HCT116 (cell line): ENCODE measurements at regions of chr22 and their contacts with region 1.

Region 1: DNA sequence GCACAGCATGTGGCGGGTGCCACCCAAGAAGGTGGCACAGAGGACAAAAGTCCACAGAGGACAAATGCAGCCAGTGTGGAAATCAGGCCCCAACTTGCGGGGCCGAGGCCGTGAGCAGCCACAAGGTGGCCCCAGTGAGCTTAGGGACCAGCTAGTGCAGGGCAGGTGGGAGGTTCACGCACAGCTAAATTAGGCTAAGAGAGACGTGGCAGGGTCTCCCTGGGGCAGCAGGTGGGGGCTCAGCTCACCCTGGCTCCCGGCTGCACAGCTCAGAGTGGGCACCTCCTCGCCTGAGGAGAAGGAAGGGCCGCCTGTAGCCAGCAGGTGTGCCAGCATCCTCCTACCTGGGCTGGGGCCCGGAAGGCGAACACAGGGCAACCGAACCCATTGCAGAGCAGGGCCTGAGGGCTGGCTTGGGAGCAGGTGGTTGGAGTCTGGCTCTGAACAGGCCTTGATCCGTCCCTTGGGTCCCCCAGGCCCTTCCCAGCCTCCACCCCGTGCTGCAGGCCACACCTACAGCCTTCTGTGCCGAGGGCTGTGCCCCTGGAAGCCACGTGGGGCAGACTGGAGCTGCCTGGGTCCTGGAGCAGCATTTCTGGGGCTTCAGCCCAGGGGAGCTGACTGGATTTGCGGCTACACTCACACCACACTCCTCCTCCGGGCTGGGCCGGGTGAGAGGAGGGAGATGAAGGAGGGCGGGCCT is 26.1 kb upstream of the CELSR1 start:
- DNase-seq: peak; percentile 57
- ATAC-seq: peak; percentile 96
- H3K4me3 ChIP-seq: peak overlapping the region; percentile 32 to 47
- H3K27ac ChIP-seq: peak overlapping the region; percentile 81
- H3K4me1 ChIP-seq: peaks cover 19 to 32% of the 10 kb centered on the region in 2 experiments
- H3K27me3 ChIP-seq: no peaks in the 10 kb centered on the region
- CTCF ChIP-seq: peak; percentile 72 to 81 (median 75)
- POLR2A ChIP-seq: peak; percentile 40
- RAD21 ChIP-seq: peak; percentile 83

Region 2: GRCh38 chr22:46367707-46368191 is 195.8 kb before region 1 on chr22:
- CTCF ChIA-PET with region 1: interaction called, 15 read pairs
- POLR2A ChIA-PET with region 1: interaction called, 3 read pairs
- RAD21 ChIA-PET with region 1: interaction called in 1 of 2 experiments, 3 read pairs
- intact Hi-C with region 1: no loop called
- DNase-seq: peak; percentile 29
- ATAC-seq: peak; percentile 94
- H3K4me3 ChIP-seq: no peak overlapping the region
- H3K27ac ChIP-seq: no peak overlapping the region
- H3K4me1 ChIP-seq: peaks cover 0 to 12% of the 10 kb centered on the region in 2 experiments; a peak in 2 of 4 replicates
- H3K27me3 ChIP-seq: no peaks in the 10 kb centered on the region
- CTCF ChIP-seq: peak; percentile 85 to 96 (median 90)
- POLR2A ChIP-seq: no peak
- RAD21 ChIP-seq: peak; percentile 93

Region 3: GRCh38 chr22:46576556-46577367 is 13.2 kb after region 1 on chr22:
- CTCF ChIA-PET with region 1: interaction called, 13 read pairs
- POLR2A ChIA-PET with region 1: interaction called, 4 read pairs
- RAD21 ChIA-PET with region 1: no interaction called
- intact Hi-C with region 1: no loop called
- DNase-seq: no peak
- ATAC-seq: peak; percentile 65
- H3K4me3 ChIP-seq: peak overlapping the region; percentile 79 to 82; a peak in 3 of 4 replicates
- H3K27ac ChIP-seq: peak overlapping the region; percentile 68; the same call in 1 of the 2 replicates
- H3K4me1 ChIP-seq: peaks cover 37 to 53% of the 10 kb centered on the region in 2 experiments
- H3K27me3 ChIP-seq: no peaks in the 10 kb centered on the region
- CTCF ChIP-seq: no peak
- POLR2A ChIP-seq: peak; percentile 30
- RAD21 ChIP-seq: no peak

Region 4: GRCh38 chr22:46625113-46625842 is 61.7 kb after region 1 on chr22:
- CTCF ChIA-PET with region 1: interaction called, 13 read pairs
- POLR2A ChIA-PET with region 1: no interaction called
- RAD21 ChIA-PET with region 1: no interaction called
- intact Hi-C with region 1: no loop called
- DNase-seq: no peak
- ATAC-seq: no peak
- H3K4me3 ChIP-seq: no peak overlapping the region
- H3K27ac ChIP-seq: no peak overlapping the region
- H3K4me1 ChIP-seq: peaks cover 0 to 4% of the 10 kb centered on the region in 2 experiments; a peak in 1 of 4 replicates
- H3K27me3 ChIP-seq: no peaks in the 10 kb centered on the region
- CTCF ChIP-seq: no peak
- POLR2A ChIP-seq: no peak
- RAD21 ChIP-seq: no peak

Region 5: GRCh38 chr22:46671824-46672432 is 108.4 kb after region 1 on chr22:
- CTCF ChIA-PET with region 1: interaction called, 11 read pairs
- POLR2A ChIA-PET with region 1: no interaction called
- RAD21 ChIA-PET with region 1: no interaction called
- intact Hi-C with region 1: no loop called
- DNase-seq: no peak
- ATAC-seq: no peak
- H3K4me3 ChIP-seq: no peak overlapping the region
- H3K27ac ChIP-seq: no peak overlapping the region
- H3K4me1 ChIP-seq: no peaks in the 10 kb centered on the region
- H3K27me3 ChIP-seq: no peaks in the 10 kb centered on the region
- CTCF ChIP-seq: no peak
- POLR2A ChIP-seq: no peak
- RAD21 ChIP-seq: no peak

Region 6: DNA sequence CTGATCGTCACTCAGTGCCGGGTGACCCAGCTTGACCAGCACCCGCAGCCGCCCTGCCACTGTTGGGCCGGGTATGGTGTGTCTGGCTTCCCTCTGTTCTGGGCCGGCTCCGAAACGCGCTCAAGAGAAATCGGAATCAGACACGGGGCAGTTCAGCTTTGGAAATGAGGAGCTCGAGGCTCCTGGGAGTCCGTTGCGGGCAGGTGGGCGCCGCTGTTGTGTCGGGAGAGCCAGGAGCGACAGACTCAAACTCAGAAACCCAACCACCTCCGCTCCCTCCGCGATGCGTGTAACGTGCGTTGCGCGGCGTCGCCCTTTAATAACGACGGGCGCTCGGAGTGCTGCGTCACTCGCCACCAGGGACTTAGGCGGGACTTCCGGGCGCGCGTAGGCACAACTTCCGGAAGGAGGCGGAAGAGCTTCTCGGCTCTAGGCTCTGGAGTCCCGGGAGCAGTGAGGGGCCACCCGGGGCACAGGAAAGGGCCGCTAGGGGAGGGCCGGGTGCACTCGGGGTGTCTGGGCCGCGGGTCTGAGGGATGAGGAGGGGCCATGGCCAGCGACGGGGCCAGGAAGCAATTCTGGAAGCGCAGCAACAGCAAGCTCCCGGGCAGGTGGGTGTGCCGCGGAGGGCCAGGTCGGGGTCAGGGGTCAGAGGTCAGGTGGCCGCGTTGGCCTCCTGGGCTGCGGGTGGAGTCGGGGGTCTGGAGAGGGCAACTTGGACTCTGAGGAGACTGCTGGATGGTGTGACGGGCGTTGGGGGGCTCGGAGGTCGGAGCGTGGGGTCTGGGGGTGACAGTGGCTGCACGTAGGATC is 198.9 kb after region 1 on chr22 and contains the start of gene TBC1D22A:
- CTCF ChIA-PET with region 1: interaction called, 16 read pairs
- POLR2A ChIA-PET with region 1: interaction called, 14 read pairs
- RAD21 ChIA-PET with region 1: interaction called in 1 of 2 experiments, 3 read pairs
- intact Hi-C with region 1: no loop called
- DNase-seq: peak; percentile 90
- ATAC-seq: peak; percentile 92
- H3K4me3 ChIP-seq: peak within 1 kb of the TSS; percentile 99 to 100
- H3K27ac ChIP-seq: peak within 1 kb of the TSS; percentile 85
- H3K4me1 ChIP-seq: peaks cover 12 to 32% of the 10 kb centered on the region in 2 experiments
- H3K27me3 ChIP-seq: no peaks in the 10 kb centered on the region
- CTCF ChIP-seq: no peak
- POLR2A ChIP-seq: peak; percentile 97
- RAD21 ChIP-seq: peak; percentile 18; the same call in 1 of the 2 replicates
- total RNA-seq, gene TBC1D22A: 20.9 TPM